Gastrocnemius medialis (tissue), 4 donors: ENCODE measurements at regions of chr11 and their contacts with region 1.

Region 1: GRCh38 chr11:77547863-77548551 is 41.7 kb upstream of the AQP11 start:
- DNase-seq: no peak
- ATAC-seq: peak; percentile 61 to 77
- H3K4me3 ChIP-seq: no peak overlapping the region
- H3K27ac ChIP-seq: no peak overlapping the region
- H3K4me1 ChIP-seq: peaks cover 0 to 6% of the 10 kb centered on the region in 2 donors
- H3K27me3 ChIP-seq: no peaks in the 10 kb centered on the region
- CTCF ChIP-seq: peak; percentile 35 to 68 (median 61)
- POLR2A ChIP-seq: no peak

Region 2: DNA sequence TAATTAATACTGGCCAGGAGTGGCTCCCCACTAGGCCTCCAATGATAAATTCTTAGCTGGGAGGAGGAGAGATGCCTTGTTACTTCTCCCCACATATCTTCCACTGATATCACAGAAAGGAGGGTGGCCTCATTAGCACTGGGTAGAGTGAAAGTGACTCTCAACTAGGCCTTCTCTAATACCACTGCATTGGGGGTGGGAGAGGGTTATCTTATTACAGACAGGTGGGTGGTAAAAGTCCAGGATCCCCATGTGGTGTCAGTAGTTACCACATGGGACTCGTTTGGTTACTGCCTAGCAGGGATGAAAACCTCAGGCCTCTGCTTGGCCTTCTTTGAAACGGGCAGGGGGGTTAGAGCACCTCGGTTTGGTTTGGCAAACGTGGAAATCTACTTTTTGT is 1565.7 kb before region 1 on chr11:
- in situ Hi-C with region 1: no loop called
- intact Hi-C with region 1: no loop called
- DNase-seq: no peak
- ATAC-seq: no peak
- H3K4me3 ChIP-seq: no peak overlapping the region
- H3K27ac ChIP-seq: no peak overlapping the region
- H3K4me1 ChIP-seq: peaks cover 15 to 17% of the 10 kb centered on the region in 2 donors
- H3K27me3 ChIP-seq: no peaks in the 10 kb centered on the region
- CTCF ChIP-seq: no peak
- POLR2A ChIP-seq: no peak

Region 3: GRCh38 chr11:77127232-77127911 is 420.6 kb before region 1 on chr11:
- in situ Hi-C with region 1: no loop called
- intact Hi-C with region 1: loop called (anchors 1 kb)
- DNase-seq: no peak
- ATAC-seq: peak; percentile 55 to 63
- H3K4me3 ChIP-seq: peak overlapping the region; percentile 34 to 65 (median 51)
- H3K27ac ChIP-seq: peak overlapping the region in 1 of 4 donors; percentile 3
- H3K4me1 ChIP-seq: peaks cover 9 to 17% of the 10 kb centered on the region in 2 donors
- H3K27me3 ChIP-seq: no peaks in the 10 kb centered on the region
- CTCF ChIP-seq: peak; percentile 93 to 98 (median 96)
- POLR2A ChIP-seq: no peak

Region 4: GRCh38 chr11:77195171-77195751 is 352.7 kb before region 1 on chr11:
- in situ Hi-C with region 1: loop called in 2 of 4 experiments (anchors 10 kb)
- intact Hi-C with region 1: loop called (anchors 1 kb)
- DNase-seq: no peak
- ATAC-seq: peak in 1 of 2 donors; percentile 16
- H3K4me3 ChIP-seq: no peak overlapping the region
- H3K27ac ChIP-seq: no peak overlapping the region
- H3K4me1 ChIP-seq: peaks cover 5 to 6% of the 10 kb centered on the region in 2 donors
- H3K27me3 ChIP-seq: no peaks in the 10 kb centered on the region
- CTCF ChIP-seq: no peak
- POLR2A ChIP-seq: no peak

Region 5: GRCh38 chr11:77407618-77408017 is 140.4 kb before region 1 on chr11:
- in situ Hi-C with region 1: no loop called
- intact Hi-C with region 1: loop called (anchors 10 kb)
- DNase-seq: peak; percentile 37 to 64
- ATAC-seq: peak; percentile 74 to 76
- H3K4me3 ChIP-seq: no peak overlapping the region
- H3K27ac ChIP-seq: peak overlapping the region; percentile 65 to 86 (median 73)
- H3K4me1 ChIP-seq: peaks cover 42 to 54% of the 10 kb centered on the region in 2 donors
- H3K27me3 ChIP-seq: no peaks in the 10 kb centered on the region
- CTCF ChIP-seq: no peak
- POLR2A ChIP-seq: no peak